PC-9 (cell line): ENCODE measurements at regions of chr1 and their contacts with region 1.

Region 1: DNA sequence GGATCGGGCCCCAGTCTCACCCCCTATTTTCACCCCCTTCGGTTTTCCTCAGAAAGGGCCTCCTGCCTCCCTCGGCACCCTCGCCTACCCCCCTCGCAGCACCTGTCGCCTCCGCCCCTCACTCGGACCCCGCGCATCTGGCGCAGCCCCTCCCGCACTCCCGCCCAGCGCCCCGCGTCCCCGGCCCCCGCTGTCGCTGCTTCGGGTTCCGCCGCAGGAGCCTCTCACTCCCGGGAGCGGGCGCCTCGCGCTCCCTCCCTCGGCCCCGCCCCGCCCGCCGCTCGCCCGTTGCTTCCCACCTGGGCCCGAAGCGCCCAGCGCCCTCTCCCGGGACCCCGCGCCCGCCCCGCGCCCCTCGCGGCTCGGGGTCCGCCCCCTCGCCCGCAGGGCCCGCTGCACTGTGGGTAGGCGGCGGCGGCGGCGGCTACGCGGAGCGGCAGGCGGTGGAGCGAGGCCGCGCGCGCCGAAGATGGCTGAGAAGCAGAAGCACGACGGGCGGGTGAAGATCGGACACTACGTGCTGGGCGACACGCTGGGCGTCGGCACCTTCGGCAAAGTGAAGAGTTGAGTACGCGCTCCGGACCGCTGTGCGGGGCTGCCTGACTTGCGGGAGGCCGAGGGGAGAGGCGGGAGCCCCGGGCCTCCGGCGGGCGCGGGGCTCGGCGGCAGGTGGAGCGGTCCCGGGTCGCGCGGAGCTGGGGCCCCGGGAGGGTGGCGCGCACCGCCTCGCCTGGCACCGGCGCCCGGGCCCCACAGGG is at the start of gene PRKAA2:
- DNase-seq: peak in 1 of 2 experiments; percentile 63
- H3K4me3 ChIP-seq: peak within 1 kb of the TSS; percentile 64
- H3K27ac ChIP-seq: peak within 1 kb of the TSS; percentile 42
- H3K4me1 ChIP-seq: peaks cover 26% of the 10 kb centered on the region
- H3K27me3 ChIP-seq: no peaks in the 10 kb centered on the region
- CTCF ChIP-seq: no peak
- total RNA-seq, gene PRKAA2: 4.4 and 5.0 TPM in 2 replicates

Region 2: DNA sequence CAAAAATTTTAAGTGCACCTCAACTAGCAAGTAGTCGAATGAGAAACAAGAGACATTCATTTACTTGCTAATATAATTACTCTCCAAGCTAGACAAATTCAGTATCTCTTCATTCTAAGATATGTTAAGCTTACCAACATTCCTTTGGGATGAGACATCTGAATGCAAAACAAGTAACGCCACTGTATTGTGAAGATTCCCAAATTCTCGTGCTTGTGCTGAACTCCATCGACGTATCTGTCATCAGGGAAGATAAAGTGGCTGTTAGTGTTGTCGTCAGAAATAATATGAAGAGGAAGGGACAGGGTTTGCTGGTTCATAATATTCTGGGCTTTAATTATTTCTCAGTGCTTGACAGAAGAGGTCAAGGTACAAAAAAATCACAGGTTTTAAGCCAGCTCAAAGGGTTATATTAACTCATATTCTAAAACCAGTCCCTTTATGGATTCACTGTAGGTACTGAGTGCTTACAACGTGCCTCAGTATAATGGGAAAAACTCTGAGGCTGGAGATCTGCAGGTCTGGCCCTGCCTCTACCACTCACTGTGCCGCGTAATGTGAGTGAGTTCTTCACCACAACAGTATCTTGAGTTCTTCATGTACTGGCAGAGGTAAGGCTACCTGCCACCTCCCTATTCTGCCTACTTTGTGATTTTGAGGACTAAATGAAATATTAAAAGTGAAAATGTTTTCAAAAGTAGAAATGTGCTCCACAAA is 1563.8 kb before region 1 on chr1:
- CTCF ChIA-PET with region 1: interaction called, 15 read pairs
- POLR2A ChIA-PET with region 1: no interaction called
- intact Hi-C with region 1: no loop called
- DNase-seq: peak in 1 of 2 experiments; percentile 40
- H3K4me3 ChIP-seq: no peak overlapping the region
- H3K27ac ChIP-seq: no peak overlapping the region
- H3K4me1 ChIP-seq: no peaks in the 10 kb centered on the region
- H3K27me3 ChIP-seq: no peaks in the 10 kb centered on the region
- CTCF ChIP-seq: no peak

Region 3: DNA sequence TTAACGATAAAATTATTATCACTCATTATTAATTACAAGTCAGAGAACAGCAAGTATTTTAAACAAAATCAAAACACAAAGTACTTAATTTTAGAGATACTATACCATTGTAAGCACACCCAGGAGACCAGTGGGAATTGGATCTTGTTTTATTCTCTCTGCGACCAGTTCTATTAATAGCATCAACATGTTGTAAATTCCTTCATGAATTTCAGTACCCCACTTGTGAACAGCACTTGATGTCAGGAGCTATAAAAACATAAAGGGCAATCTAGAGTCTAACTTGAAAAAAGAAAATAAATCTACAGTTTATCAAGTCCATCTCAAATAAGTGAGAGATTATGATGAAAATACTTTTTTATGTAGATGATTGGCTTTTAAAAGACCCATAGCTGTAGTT is 1472.8 kb before region 1 on chr1:
- CTCF ChIA-PET with region 1: no interaction called
- POLR2A ChIA-PET with region 1: no interaction called
- intact Hi-C with region 1: no loop called
- DNase-seq: no peak
- H3K4me3 ChIP-seq: no peak overlapping the region
- H3K27ac ChIP-seq: no peak overlapping the region
- H3K4me1 ChIP-seq: no peaks in the 10 kb centered on the region
- H3K27me3 ChIP-seq: no peaks in the 10 kb centered on the region
- CTCF ChIP-seq: no peak

Region 4: DNA sequence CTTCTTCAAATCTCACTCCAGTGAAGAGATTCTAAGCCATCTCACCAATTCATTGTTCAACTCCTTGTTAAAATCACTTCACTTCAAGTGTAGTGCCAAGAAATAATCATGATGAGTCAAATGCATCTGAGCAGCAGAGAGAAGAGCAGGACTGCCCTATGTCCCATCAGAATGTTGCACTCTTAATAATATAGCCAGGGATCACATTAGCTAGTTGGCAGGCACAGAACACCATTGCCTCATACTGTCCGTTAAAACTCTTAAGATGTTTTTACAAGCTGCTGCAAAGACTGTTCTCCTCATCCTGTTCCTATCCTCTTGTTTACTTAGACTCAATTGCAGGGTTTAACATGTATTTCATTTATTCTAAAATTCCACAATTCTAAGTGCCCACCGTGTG is 498.6 kb before region 1 on chr1:
- CTCF ChIA-PET with region 1: no interaction called
- POLR2A ChIA-PET with region 1: no interaction called
- intact Hi-C with region 1: no loop called
- DNase-seq: no peak
- H3K4me3 ChIP-seq: no peak overlapping the region
- H3K27ac ChIP-seq: no peak overlapping the region
- H3K4me1 ChIP-seq: no peaks in the 10 kb centered on the region
- H3K27me3 ChIP-seq: no peaks in the 10 kb centered on the region
- CTCF ChIP-seq: no peak

Region 5: DNA sequence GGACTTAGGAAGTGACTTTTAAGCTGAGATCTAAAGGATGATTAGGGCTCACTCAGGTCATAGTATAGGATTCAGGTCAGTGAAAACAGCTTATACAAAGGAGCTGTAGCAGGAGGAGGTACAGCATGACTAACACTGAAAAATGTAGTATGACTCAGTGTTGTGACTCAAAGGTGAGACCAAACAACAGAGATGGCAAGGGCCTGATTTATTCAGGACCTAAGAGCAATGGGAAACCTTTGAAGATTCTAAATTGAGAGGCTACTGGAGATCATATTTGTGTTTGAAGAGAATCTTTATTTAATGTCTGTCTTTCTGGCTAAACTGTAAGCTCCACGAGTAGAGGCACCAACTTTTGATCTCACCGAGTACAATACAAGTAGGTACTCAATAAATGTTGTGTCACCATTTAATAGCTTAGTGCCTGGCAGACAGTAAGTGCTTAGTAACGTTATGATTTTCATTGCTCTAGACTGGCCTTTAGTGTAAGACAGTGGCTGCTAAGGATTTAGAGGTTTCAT is 43.5 kb after region 1 on chr1:
- CTCF ChIA-PET with region 1: no interaction called
- POLR2A ChIA-PET with region 1: no interaction called
- intact Hi-C with region 1: loop called (anchors 1 kb)
- DNase-seq: peak; percentile 36 to 96
- H3K4me3 ChIP-seq: no peak overlapping the region
- H3K27ac ChIP-seq: peak overlapping the region; percentile 77
- H3K4me1 ChIP-seq: peaks cover 41% of the 10 kb centered on the region
- H3K27me3 ChIP-seq: no peaks in the 10 kb centered on the region
- CTCF ChIP-seq: no peak

Region 6: GRCh38 chr1:56703747-56704146 is 58.6 kb after region 1 on chr1:
- CTCF ChIA-PET with region 1: no interaction called
- POLR2A ChIA-PET with region 1: no interaction called
- intact Hi-C with region 1: loop called (anchors 2 kb)
- DNase-seq: no peak
- H3K4me3 ChIP-seq: no peak overlapping the region
- H3K27ac ChIP-seq: no peak overlapping the region
- H3K4me1 ChIP-seq: 0 out of 2 replicates have a peak, but pooled peaks cover 3% of the 10 kb centered on the region
- H3K27me3 ChIP-seq: no peaks in the 10 kb centered on the region
- CTCF ChIP-seq: no peak

Region 7: GRCh38 chr1:56709269-56709880 is 64.3 kb after region 1 on chr1:
- CTCF ChIA-PET with region 1: interaction called, 4 read pairs
- POLR2A ChIA-PET with region 1: no interaction called
- intact Hi-C with region 1: loop called (anchors 2 kb)
- DNase-seq: peak in 1 of 2 experiments; percentile 49
- H3K4me3 ChIP-seq: no peak overlapping the region
- H3K27ac ChIP-seq: no peak overlapping the region
- H3K4me1 ChIP-seq: peaks cover 17% of the 10 kb centered on the region
- H3K27me3 ChIP-seq: no peaks in the 10 kb centered on the region
- CTCF ChIP-seq: peak; percentile 80

Region 8: DNA sequence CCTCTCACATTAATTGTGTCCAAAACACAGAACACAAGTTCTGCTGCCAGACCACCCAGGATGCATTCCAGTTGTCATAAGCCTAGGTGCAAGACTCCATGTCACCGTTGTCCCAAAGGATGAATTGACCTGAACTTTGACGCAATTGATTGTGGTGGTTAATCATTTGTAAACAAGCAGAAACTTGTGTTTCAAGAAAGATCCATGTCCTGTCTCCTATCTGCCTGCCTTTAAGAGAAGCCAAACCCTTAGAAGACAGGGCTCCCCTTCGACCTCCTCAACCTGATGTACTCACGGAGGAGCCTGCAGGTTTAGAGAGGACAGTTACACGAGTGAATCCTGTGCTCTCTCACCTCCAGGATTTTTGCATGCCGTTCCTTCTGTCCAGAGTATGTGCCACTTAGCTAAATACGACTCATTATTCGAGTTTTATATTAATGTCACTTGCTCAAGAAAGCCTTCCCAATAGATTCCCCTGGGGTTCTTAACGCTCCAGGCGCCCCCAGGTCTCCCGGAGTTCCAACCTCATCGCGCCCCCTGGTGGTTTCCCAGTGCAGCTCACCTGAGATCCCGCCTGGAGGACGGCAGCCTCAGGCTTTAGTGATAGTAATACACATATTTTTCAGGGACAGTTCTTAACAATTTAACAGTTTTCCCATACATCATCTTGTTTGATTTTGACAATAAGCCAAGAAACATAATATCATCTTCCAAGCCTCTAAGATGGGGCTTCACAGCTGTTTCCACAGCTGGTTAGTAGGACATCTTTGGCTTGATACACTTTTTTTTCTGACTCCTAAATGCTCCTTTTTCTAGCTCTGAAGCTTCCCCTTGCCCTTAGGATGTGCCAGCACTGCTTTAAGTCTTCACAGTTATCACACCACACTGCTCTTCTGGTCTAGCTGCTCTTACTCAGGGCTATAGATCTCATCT is 323.1 kb after region 1 on chr1:
- CTCF ChIA-PET with region 1: no interaction called
- POLR2A ChIA-PET with region 1: no interaction called
- intact Hi-C with region 1: loop called (anchors 5 kb)
- DNase-seq: peak in 1 of 2 experiments; percentile 16
- H3K4me3 ChIP-seq: no peak overlapping the region
- H3K27ac ChIP-seq: no peak overlapping the region
- H3K4me1 ChIP-seq: no peaks in the 10 kb centered on the region
- H3K27me3 ChIP-seq: peaks cover 35% of the 10 kb centered on the region
- CTCF ChIP-seq: peak; percentile 69